Aorta (tissue), 5 donors: ENCODE measurements at regions of chrX and their contacts with region 1.

Region 1: DNA sequence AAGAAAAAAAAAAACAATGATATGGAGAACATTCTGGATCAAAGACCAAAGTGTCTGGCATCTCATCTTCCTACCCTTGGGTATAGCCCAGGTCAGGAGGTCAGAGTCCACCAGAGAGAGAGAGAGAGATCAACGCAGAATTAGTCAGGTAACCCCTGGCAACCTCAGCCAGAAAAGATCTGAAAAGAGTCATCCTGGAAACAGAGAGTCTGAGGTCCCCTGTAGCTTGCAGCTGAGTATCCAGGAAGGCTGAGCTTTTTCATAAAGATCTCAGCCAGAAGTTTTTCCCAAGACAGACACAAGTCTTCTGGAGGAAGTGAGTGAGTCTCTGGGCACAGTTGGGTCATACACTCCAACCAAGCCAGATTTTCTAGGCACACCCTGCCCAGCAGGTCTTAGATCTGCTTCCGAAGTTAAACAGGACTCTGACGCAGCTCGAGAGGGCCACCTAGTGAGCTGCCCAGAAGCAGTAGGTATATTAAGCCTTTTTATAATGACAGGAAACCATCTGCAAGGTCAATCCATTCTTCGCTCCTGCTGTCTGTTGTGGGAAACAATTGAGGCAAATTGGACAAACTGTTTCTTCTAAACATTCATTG is 35.7 kb downstream of the ACE2 start:
- DNase-seq: peak; percentile 57 to 82
- ATAC-seq: peak; percentile 80
- H3K4me3 ChIP-seq: no peak overlapping the region
- H3K27ac ChIP-seq: no peak overlapping the region
- H3K4me1 ChIP-seq: no peaks in the 10 kb centered on the region
- H3K27me3 ChIP-seq: no peaks in the 10 kb centered on the region

Region 2: DNA sequence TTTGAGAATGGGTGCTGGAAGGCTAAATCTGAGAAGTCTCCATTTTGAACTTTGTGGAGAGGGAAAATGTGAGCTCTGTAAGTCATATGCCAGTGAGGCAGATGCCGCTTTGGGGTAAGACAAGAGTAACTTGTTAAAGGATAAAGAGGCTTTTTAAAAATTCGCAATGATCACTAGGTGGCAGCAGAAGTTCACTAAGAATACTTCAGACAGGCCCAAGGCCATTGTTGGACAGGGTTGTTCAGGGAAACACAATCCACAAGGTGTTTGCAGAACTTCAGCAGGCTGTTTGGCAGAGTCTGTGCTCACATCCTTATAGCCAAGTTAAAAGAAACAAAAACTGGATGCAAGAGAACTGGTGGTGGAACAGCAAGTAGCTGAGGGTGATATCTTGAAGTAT is 216.0 kb before region 1 on chrX:
- intact Hi-C with region 1: loop called (anchors 10 kb)
- DNase-seq: no peak
- ATAC-seq: peak; percentile 70
- H3K4me3 ChIP-seq: no peak overlapping the region
- H3K27ac ChIP-seq: no peak overlapping the region
- H3K4me1 ChIP-seq: no peaks in the 10 kb centered on the region
- H3K27me3 ChIP-seq: no peaks in the 10 kb centered on the region

Region 3: DNA sequence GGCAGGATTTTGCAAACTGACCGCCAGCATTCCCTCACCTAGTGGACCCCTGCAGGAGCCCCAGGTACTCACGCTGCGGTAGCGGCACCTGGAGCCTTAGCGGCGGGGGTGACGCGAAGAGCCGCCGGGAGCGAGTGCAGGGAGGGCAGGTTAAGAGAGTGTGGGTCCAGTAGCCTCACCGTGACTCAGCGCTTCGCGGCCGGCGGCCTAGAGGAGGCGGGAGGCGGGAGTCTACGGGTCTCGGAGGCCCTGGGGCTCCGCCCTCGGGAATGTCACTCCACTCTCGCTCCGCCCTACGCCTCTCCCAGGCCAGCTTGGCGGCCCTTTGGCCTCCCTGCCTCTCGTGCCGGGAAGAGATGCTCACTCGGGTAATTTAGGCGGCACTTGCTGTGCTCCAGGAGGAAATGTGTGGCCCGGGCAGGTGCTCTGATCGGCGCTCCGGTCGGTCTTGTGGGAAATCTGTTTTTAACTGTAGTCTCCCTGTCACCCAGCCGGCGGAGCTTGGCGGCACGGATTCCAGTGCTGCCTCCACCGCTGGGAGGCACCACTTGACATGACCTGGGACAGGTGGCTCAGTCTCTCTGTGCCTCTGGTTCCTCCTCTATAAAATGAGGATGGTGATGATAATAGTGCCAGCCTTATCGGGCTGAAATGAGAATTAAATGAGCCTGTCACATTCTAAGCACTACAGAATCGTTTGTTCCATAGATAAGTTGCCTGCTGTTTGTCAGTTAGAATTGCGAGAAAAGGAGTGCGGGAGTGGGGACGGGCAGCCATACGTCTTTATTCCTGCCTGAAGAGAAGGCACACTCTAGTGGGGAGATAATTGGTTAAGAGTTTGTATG is 71.7 kb before region 1 on chrX and contains the start of gene PIR:
- intact Hi-C with region 1: loop called in 1 of 2 experiments (anchors 5 kb)
- DNase-seq: peak; percentile 92 to 96
- ATAC-seq: peak; percentile 98
- H3K4me3 ChIP-seq: peak within 1 kb of the TSS; percentile 58 to 81
- H3K27ac ChIP-seq: peak within 1 kb of the TSS in 1 of 2 donors; percentile 56
- H3K4me1 ChIP-seq: no peaks in the 10 kb centered on the region
- H3K27me3 ChIP-seq: no peaks in the 10 kb centered on the region
- total RNA-seq, gene PIR: 11.5 to 26.3 TPM

Region 4: GRCh38 chrX:15686818-15687685 is 122.0 kb after region 1 on chrX:
- intact Hi-C with region 1: no loop called
- DNase-seq: no peak
- ATAC-seq: peak; percentile 89
- H3K4me3 ChIP-seq: no peak overlapping the region
- H3K27ac ChIP-seq: no peak overlapping the region
- H3K4me1 ChIP-seq: no peaks in the 10 kb centered on the region
- H3K27me3 ChIP-seq: no peaks in the 10 kb centered on the region

Region 5: DNA sequence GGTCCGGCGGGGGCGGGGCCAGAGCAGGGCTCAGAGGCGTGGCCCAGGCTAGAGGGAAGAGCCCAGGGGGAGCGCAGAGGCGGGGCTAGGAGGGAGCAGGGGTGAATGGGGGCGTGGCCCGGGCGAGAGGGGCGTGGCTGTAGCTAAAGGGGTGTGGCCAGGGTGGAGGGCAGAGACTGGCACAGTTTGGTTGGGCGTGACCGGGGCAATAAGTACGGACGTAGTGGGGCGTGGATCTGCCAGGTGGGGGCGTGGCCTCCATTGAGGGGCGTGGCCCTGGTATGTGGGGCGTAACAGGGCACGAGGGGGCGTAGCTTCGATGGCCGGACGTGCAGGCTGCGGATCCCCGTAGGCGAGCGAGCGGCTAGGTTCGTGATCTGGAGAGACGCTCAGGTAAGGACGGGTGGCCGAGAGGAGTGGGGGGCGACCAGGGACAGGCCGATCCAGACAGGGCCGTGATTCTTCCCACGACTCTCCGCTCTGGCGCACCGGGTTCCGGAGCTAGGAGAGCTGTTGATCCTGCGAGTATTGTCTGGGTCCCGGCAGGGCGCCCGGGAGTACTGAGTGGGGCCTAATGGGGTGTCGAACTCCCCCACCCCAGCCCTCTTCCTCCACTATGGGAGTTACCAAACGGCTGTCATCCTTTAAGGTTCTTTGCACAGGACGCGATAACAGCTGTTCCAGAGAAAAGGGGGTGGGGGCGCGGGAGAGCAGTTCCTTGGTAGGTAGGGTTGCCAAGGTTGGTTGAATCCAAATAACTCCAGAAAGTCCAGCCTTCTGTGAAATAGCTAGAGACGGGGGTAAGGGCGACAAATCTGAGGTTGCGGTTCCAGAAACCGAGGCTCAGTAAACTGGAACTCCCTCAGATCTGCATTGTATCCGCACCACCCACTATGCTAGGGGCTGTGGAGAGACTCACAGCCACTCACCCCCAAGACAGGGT is 173.2 kb after region 1 on chrX and contains the start of gene CA5B:
- intact Hi-C with region 1: no loop called
- DNase-seq: peak; percentile 96 to 99
- ATAC-seq: peak; percentile 99
- H3K4me3 ChIP-seq: peak within 1 kb of the TSS; percentile 6 to 63
- H3K27ac ChIP-seq: peak within 1 kb of the TSS in 1 of 2 donors; percentile 32
- H3K4me1 ChIP-seq: no peaks in the 10 kb centered on the region
- H3K27me3 ChIP-seq: no peaks in the 10 kb centered on the region
- total RNA-seq, gene CA5B: 30.8 to 46.4 TPM